Activated B cell treated with CpG ODN at 0.5 μM for 24 hours (primary cell): ENCODE measurements at regions of chr17 and their contacts with region 1.

Region 1: GRCh38 chr17:78250891-78251794 is 19.7 kb downstream of the TMEM235 start:
- DNase-seq: peak; percentile 82
- ATAC-seq: peak; percentile 81
- H3K4me3 Mint-ChIP-seq: no peak overlapping the region
- H3K27ac Mint-ChIP-seq: no peak overlapping the region
- H3K4me1 Mint-ChIP-seq: peaks cover 34% of the 10 kb centered on the region
- H3K27me3 Mint-ChIP-seq: no peaks in the 10 kb centered on the region
- CTCF ChIP-seq: peak; percentile 78

Region 2: GRCh38 chr17:78082988-78083387 is 168.2 kb before region 1 on chr17:
- CTCF ChIA-PET with region 1: interaction called, 32 read pairs
- POLR2A ChIA-PET with region 1: interaction called, 3 read pairs
- intact Hi-C with region 1: loop called (anchors 1 kb)
- DNase-seq: no peak
- ATAC-seq: no peak
- H3K4me3 Mint-ChIP-seq: no peak overlapping the region
- H3K27ac Mint-ChIP-seq: no peak overlapping the region
- H3K4me1 Mint-ChIP-seq: no peaks in the 10 kb centered on the region
- H3K27me3 Mint-ChIP-seq: no peaks in the 10 kb centered on the region
- CTCF ChIP-seq: no peak

Region 3: GRCh38 chr17:78128551-78129350 is 122.4 kb before region 1 on chr17 and contains the start of gene TMC6:
- CTCF ChIA-PET with region 1: interaction called, 4 read pairs
- POLR2A ChIA-PET with region 1: interaction called, 15 read pairs
- intact Hi-C with region 1: loop called (anchors 5 kb)
- DNase-seq: peak; percentile 66
- ATAC-seq: peak; percentile 17
- H3K4me3 Mint-ChIP-seq: peak within 1 kb of the TSS; percentile 92
- H3K27ac Mint-ChIP-seq: peak within 1 kb of the TSS; percentile 93
- H3K4me1 Mint-ChIP-seq: peaks cover 74% of the 10 kb centered on the region
- H3K27me3 Mint-ChIP-seq: no peaks in the 10 kb centered on the region
- CTCF ChIP-seq: no peak
- total RNA-seq, gene TMC6: 746 and 896 TPM in 2 replicates

Region 4: GRCh38 chr17:78176548-78177025 is 74.6 kb before region 1 on chr17:
- CTCF ChIA-PET with region 1: interaction called, 11 read pairs
- POLR2A ChIA-PET with region 1: interaction called, 6 read pairs
- intact Hi-C with region 1: loop called (anchors 1 kb)
- DNase-seq: peak; percentile 76
- ATAC-seq: peak; percentile 69
- H3K4me3 Mint-ChIP-seq: no peak overlapping the region
- H3K27ac Mint-ChIP-seq: peak overlapping the region; percentile 63
- H3K4me1 Mint-ChIP-seq: peaks cover 79% of the 10 kb centered on the region
- H3K27me3 Mint-ChIP-seq: no peaks in the 10 kb centered on the region
- CTCF ChIP-seq: peak; percentile 92

Region 5: DNA sequence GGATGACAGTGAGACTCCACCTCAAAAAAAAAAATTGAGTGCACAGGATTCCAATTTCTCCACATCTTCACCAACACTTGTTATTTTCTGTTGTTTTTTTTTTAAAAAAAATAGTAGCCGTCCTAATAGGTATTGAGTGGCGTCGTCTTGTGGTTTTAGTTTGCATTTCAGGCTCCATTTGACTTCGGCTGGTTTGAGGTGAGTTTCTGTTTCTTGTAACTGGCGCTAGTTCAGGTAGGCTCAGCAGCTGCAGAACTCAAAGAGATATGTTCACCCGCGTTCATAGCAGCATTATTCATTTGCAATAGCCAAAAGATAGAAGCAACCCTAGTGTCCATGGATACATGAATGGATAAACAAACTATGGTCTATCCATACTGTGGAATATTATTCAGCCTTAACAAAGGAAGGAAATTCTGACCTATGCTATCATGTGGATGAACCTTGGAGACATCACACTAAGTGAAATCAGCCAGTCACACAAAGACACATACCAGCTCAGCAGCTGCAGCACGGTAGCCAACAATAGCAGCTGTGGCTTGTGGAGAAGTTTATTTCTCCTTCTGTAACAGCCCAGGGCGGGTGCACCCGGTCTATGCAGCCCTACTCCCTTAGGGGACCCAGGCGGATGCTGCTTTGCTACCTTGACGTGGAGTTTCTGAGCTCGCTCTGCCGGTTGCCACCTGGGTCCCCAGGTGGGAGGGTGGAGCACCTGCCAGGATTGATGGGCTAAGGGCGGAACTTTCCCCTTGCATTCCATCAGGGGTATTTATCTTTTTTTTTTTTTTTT is 25.1 kb after region 1 on chr17:
- CTCF ChIA-PET with region 1: interaction called, 4 read pairs
- POLR2A ChIA-PET with region 1: interaction called, 11 read pairs
- intact Hi-C with region 1: loop called (anchors 1 kb)
- DNase-seq: peak; percentile 30
- ATAC-seq: peak; percentile 78
- H3K4me3 Mint-ChIP-seq: peak overlapping the region; percentile 38
- H3K27ac Mint-ChIP-seq: peak overlapping the region; percentile 65
- H3K4me1 Mint-ChIP-seq: peaks cover 42% of the 10 kb centered on the region
- H3K27me3 Mint-ChIP-seq: peaks cover 12% of the 10 kb centered on the region
- CTCF ChIP-seq: no peak

Region 6: GRCh38 chr17:78421484-78422266 is 170.5 kb after region 1 on chr17:
- CTCF ChIA-PET with region 1: interaction called, 59 read pairs
- POLR2A ChIA-PET with region 1: no interaction called
- intact Hi-C with region 1: loop called (anchors 1 kb)
- DNase-seq: peak; percentile 73
- ATAC-seq: peak; percentile 98
- H3K4me3 Mint-ChIP-seq: no peak overlapping the region
- H3K27ac Mint-ChIP-seq: no peak overlapping the region
- H3K4me1 Mint-ChIP-seq: peaks cover 2% of the 10 kb centered on the region
- H3K27me3 Mint-ChIP-seq: no peaks in the 10 kb centered on the region
- CTCF ChIP-seq: peak; percentile 69